Activated CD4-positive, alpha-beta memory T cell treated with anti-CD3 and anti-CD28 coated beads for 36 hours (primary cell): ENCODE measurements at regions of chr11 and their contacts with region 1.

Region 1: DNA sequence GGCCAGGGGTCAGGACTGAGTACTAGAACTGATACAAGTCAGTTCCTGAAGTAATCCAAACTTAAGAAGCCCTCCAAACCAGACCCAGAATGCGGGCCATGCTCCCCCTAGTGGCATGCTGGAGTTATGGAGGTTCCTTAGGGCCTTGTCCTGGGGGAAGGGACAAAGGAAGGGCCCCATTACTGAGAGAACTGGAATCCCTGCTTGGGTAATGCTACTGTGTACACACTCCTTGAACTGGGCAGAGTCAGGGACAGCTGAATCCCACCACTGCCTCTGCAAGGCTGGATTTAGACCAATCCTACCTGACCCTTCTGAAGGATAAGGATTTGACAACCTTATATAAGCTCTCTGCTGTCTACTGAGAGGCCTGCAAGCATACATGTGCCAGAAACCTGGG is 97.3 kb upstream of the AKIP1 start:
- DNase-seq: peak; percentile 71
- H3K4me3 Mint-ChIP-seq: no peak overlapping the region
- H3K27ac Mint-ChIP-seq: no peak overlapping the region
- H3K4me1 Mint-ChIP-seq: peaks cover 5% of the 10 kb centered on the region
- H3K27me3 Mint-ChIP-seq: peaks cover 19% of the 10 kb centered on the region

Region 2: GRCh38 chr11:8593935-8594909 is 219.4 kb before region 1 on chr11 and contains the start of gene STK33:
- CTCF ChIA-PET with region 1: no interaction called
- POLR2A ChIA-PET with region 1: no interaction called
- intact Hi-C with region 1: loop called (anchors 10 kb)
- DNase-seq: peak; percentile 55
- H3K4me3 Mint-ChIP-seq: peak within 1 kb of the TSS; percentile 61
- H3K27ac Mint-ChIP-seq: no peak within 1 kb of the TSS
- H3K4me1 Mint-ChIP-seq: peaks cover 3% of the 10 kb centered on the region
- H3K27me3 Mint-ChIP-seq: peaks cover 49% of the 10 kb centered on the region
- total RNA-seq, gene STK33: 0.24 to 0.46 TPM

Region 3: GRCh38 chr11:8688414-8689362 is 125.0 kb before region 1 on chr11:
- CTCF ChIA-PET with region 1: interaction called, 6 read pairs
- POLR2A ChIA-PET with region 1: no interaction called
- intact Hi-C with region 1: loop called (anchors 2 kb)
- DNase-seq: peak; percentile 94
- H3K4me3 Mint-ChIP-seq: peak overlapping the region; percentile 97
- H3K27ac Mint-ChIP-seq: peak overlapping the region; percentile 88
- H3K4me1 Mint-ChIP-seq: peaks cover 57% of the 10 kb centered on the region
- H3K27me3 Mint-ChIP-seq: no peaks in the 10 kb centered on the region

Region 4: GRCh38 chr11:8749202-8749601 is 64.5 kb before region 1 on chr11:
- CTCF ChIA-PET with region 1: no interaction called
- POLR2A ChIA-PET with region 1: no interaction called
- intact Hi-C with region 1: no loop called
- DNase-seq: no peak
- H3K4me3 Mint-ChIP-seq: no peak overlapping the region
- H3K27ac Mint-ChIP-seq: no peak overlapping the region
- H3K4me1 Mint-ChIP-seq: peaks cover 4% of the 10 kb centered on the region
- H3K27me3 Mint-ChIP-seq: peaks cover 20% of the 10 kb centered on the region

Region 5: DNA sequence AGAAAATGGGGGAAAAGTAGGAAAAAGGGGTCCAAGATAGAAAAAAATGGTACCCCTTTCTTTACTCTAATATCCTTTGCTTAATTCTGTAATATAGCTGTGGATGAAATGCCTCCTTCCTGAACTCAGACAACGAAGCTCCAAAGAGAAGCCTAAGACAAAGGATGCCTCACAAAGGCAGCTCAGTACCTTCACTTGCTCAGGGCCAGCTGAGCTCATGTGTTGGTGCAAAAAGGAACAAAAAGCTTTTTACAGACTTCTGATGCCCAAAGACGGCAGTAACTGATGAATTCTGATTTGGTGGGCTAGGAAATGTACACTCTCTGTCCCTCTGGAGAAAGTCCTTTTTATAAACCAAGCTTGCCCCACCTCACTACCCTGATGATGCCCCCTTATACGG is 374.0 kb after region 1 on chr11:
- CTCF ChIA-PET with region 1: no interaction called
- POLR2A ChIA-PET with region 1: no interaction called
- intact Hi-C with region 1: no loop called
- DNase-seq: no peak
- H3K4me3 Mint-ChIP-seq: no peak overlapping the region
- H3K27ac Mint-ChIP-seq: no peak overlapping the region
- H3K4me1 Mint-ChIP-seq: no peaks in the 10 kb centered on the region
- H3K27me3 Mint-ChIP-seq: no peaks in the 10 kb centered on the region